IMR-90 (cell line): ENCODE measurements at regions of chr20 and their contacts with region 1.

Region 1: GRCh38 chr20:17648791-17649730 is 33.0 kb downstream of the RRBP1 start:
- DNase-seq: no peak
- ATAC-seq: no peak
- H3K4me3 ChIP-seq: no peak overlapping the region
- H3K27ac ChIP-seq: no peak overlapping the region
- H3K4me1 ChIP-seq: peaks cover 47% of the 10 kb centered on the region
- H3K27me3 ChIP-seq: no peaks in the 10 kb centered on the region
- CTCF ChIP-seq: peak; percentile 18; the same call in 1 of the 2 replicates
- POLR2A ChIP-seq: no peak
- RAD21 ChIP-seq: no peak

Region 2: DNA sequence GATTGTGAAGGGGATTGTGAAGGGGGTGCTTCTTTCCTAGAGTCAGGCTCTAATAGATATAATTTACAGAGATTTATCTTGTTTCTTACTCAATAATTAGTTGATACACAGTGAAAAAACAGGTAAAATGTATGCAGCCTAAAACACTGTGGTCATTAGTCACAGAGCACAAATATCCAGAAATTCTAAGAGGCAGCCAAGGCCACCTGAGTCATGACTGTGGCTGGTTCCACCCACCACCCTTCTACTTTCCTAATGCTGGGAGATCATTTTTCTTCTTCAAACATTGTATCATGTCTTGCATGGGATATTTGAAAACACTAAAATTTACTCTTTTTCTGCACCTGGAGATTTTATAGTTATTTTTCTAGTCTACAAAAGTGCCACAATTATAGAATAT is 719.3 kb before region 1 on chr20:
- CTCF ChIA-PET with region 1: no interaction called
- POLR2A ChIA-PET with region 1: no interaction called
- dilution Hi-C with region 1: no loop called
- in situ Hi-C with region 1: no loop called
- intact Hi-C with region 1: no loop called
- DNase-seq: peak; percentile 59
- ATAC-seq: peak; percentile 79
- H3K4me3 ChIP-seq: no peak overlapping the region
- H3K27ac ChIP-seq: 0 out of 2 replicates have a peak overlapping the region, but pooled peaks have one; percentile 17
- H3K4me1 ChIP-seq: peaks cover 9% of the 10 kb centered on the region
- H3K27me3 ChIP-seq: no peaks in the 10 kb centered on the region
- CTCF ChIP-seq: no peak
- POLR2A ChIP-seq: no peak
- RAD21 ChIP-seq: no peak

Region 3: GRCh38 chr20:17910828-17911294 is 261.8 kb after region 1 on chr20:
- CTCF ChIA-PET with region 1: no interaction called
- POLR2A ChIA-PET with region 1: no interaction called
- dilution Hi-C with region 1: no loop called
- in situ Hi-C with region 1: no loop called
- intact Hi-C with region 1: no loop called
- DNase-seq: peak; percentile 81
- ATAC-seq: peak; percentile 88
- H3K4me3 ChIP-seq: no peak overlapping the region
- H3K27ac ChIP-seq: no peak overlapping the region
- H3K4me1 ChIP-seq: peaks cover 16% of the 10 kb centered on the region
- H3K27me3 ChIP-seq: no peaks in the 10 kb centered on the region
- CTCF ChIP-seq: 0 out of 2 replicates have a peak, but pooled peaks have one; percentile 12
- POLR2A ChIP-seq: peak; percentile 63; the same call in 1 of the 2 replicates
- RAD21 ChIP-seq: peak; percentile 47

Region 4: DNA sequence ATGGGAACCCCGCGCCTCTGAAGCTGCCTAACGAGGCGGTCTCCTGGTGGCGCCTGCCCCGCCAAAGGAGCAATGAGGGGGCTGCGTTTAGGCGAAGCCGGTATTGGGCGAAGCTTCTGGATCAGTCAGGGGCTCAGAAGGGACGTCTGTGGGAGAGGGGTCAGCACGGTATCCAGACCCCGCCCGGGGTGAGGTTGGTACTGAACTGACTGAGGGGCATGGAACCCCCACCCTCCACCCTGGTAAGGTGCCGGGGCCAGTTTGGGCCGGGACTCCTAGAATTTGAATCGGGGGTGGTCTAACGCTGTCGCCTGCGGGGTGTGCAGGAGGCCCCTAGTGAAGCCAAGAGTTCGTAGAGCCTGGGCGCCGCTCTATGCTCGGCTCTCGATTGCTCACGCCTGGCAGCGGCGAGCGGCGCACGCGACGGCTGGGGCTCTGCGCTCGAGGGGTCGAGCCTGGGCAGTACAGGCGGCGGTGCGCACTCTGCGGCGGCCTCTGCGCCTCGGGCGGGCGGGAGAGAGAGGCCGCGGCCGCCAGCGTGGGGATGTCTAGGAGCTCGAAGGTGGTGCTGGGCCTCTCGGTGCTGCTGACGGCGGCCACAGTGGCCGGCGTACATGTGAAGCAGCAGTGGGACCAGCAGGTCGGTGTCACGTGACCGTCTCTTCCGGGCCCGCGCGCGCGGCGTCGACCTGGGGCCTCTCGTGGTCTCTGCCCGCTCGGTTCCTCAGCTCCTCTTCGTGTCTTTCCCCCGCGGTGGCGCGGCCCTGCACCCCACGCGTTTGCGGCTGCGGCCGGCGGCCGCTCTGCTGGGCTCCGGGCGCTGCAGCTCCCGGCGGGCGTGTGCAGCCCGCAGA is 488.6 kb after region 1 on chr20 and contains the starts of genes KAT14 and PET117:
- CTCF ChIA-PET with region 1: no interaction called
- POLR2A ChIA-PET with region 1: no interaction called
- dilution Hi-C with region 1: no loop called
- in situ Hi-C with region 1: loop called (anchors 25 kb)
- intact Hi-C with region 1: no loop called
- DNase-seq: peak; percentile 89
- ATAC-seq: peak; percentile 96
- H3K4me3 ChIP-seq: peak within 1 kb of the TSS; percentile 99
- H3K27ac ChIP-seq: peak within 1 kb of the TSS; percentile 94
- H3K4me1 ChIP-seq: peaks cover 2% of the 10 kb centered on the region; the same call in 1 of the 2 replicates
- H3K27me3 ChIP-seq: peaks cover 4% of the 10 kb centered on the region; the same call in 1 of the 2 replicates
- CTCF ChIP-seq: no peak
- POLR2A ChIP-seq: peak; percentile 42; the same call in 1 of the 2 replicates
- RAD21 ChIP-seq: no peak
- total RNA-seq, gene KAT14: 12.4 and 15.3 TPM in 2 replicates
- total RNA-seq, gene PET117: 3.9 and 12.8 TPM in 2 replicates